HepG2 (cell line): ENCODE measurements at regions of chr18 and their contacts with region 1.

Region 1: DNA sequence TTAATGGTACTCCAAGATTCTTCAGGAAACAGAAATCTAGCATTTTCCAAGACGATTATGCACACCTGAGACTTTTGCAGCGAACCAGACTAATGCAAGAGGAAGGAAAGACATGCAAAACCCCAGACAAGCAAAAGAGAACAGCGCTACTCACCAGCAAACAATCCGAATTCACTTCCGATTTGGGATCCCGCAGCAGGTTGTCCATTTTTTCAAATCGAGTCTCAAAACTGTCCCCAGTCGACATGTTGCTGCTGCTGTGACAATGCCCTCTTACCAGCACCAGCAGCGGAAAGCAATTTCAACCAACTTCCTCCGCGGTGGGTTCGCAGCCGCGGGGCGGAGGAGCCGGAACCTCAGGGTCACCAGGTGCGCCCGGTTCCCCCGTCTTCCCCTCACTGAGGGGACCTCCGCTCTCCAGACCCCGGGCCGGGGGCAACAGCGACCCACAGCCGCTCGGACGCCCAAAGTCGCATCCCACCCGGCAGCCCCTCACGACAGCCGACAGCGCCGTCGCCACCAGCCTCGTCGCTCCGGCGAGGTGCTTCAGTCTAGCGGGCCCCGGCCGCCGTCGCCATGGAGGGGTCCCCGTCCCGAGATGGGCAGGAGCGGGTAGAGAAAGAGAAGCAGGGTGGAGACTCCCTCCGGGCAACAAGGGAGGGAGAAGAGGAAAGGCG is 811 bp downstream of the ROCK1 start:
- DNase-seq: no peak
- ATAC-seq: peak; percentile 39
- H3K4me3 ChIP-seq: peak overlapping the region; percentile 84 to 100 (median 100)
- H3K27ac ChIP-seq: peak overlapping the region; percentile 91
- H3K4me1 ChIP-seq: peaks cover 47% of the 10 kb centered on the region
- H3K27me3 ChIP-seq: no peaks in the 10 kb centered on the region; a peak in 1 of 5 replicates
- CTCF ChIP-seq: no peak
- EP300 ChIP-seq: no peak
- POLR2A ChIP-seq: no peak
- RAD21 ChIP-seq: no peak

Region 2: DNA sequence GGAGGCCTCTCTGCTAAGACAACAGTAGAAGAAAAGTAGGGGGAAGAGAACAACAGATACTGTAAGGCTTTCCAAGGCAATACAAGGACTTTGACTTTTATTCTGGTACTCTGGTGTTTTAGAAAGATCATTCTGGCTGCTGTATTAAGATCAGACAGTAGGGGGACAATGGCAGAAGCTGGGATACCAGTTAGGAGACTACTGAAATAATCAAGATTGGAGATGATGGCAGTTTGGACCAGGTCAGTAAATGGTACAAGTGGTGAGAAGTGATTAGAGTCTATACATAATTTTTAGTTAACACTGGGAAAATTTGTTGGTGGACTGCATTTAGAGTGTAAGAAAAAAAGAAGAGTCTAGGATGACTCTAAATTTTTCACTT is 138.9 kb before region 1 on chr18:
- CTCF ChIA-PET with region 1: no interaction called
- POLR2A ChIA-PET with region 1: no interaction called
- in situ Hi-C with region 1: no loop called
- intact Hi-C with region 1: loop called (anchors 1 kb)
- DNase-seq: peak; percentile 23
- ATAC-seq: peak; percentile 76
- H3K4me3 ChIP-seq: no peak overlapping the region
- H3K27ac ChIP-seq: no peak overlapping the region
- H3K4me1 ChIP-seq: no peaks in the 10 kb centered on the region
- H3K27me3 ChIP-seq: no peaks in the 10 kb centered on the region
- CTCF ChIP-seq: peak; percentile 30; the same call in 1 of the 2 replicates
- EP300 ChIP-seq: no peak
- POLR2A ChIP-seq: no peak
- RAD21 ChIP-seq: peak; percentile 18; the same call in 1 of the 2 replicates

Region 3: GRCh38 chr18:21053127-21053526 is 57.7 kb before region 1 on chr18:
- CTCF ChIA-PET with region 1: no interaction called
- POLR2A ChIA-PET with region 1: no interaction called
- in situ Hi-C with region 1: no loop called
- intact Hi-C with region 1: loop called (anchors 10 kb)
- DNase-seq: peak; percentile 69
- ATAC-seq: peak; percentile 90
- H3K4me3 ChIP-seq: no peak overlapping the region
- H3K27ac ChIP-seq: no peak overlapping the region
- H3K4me1 ChIP-seq: peaks cover 14% of the 10 kb centered on the region
- H3K27me3 ChIP-seq: no peaks in the 10 kb centered on the region
- CTCF ChIP-seq: no peak
- EP300 ChIP-seq: no peak
- POLR2A ChIP-seq: no peak
- RAD21 ChIP-seq: no peak

Region 4: DNA sequence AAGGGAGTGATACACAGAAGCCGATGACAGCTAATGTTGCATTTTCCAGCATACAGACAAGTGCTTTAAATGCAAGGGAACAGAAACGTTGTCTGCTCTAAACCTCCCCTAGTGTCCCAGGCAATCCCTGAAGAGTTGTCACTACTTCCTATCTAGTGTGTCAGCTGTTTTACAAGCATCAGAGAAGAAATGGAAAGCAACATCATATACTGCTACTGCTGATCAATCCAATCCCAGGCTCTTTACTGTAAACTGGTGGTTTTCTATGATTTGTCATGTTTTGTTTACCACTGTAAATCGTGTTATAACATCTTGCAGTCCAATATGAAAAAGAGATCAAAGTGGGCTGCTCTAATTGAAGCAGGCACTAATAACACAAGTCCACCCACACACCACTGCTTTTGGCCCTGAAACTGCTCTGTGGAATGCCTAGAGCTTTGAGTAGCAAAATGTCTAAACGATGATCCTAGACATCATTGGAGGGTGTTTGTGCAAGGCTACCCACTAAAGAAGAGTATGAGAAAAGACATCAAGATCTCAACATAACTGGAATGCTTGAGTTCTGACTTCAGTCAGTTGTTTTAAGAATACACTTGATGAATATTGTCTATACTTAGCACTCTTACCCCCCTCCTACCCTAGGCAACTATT is 18.9 kb after region 1 on chr18:
- CTCF ChIA-PET with region 1: no interaction called
- POLR2A ChIA-PET with region 1: no interaction called
- in situ Hi-C with region 1: no loop called
- intact Hi-C with region 1: no loop called
- DNase-seq: no peak
- ATAC-seq: no peak
- H3K4me3 ChIP-seq: no peak overlapping the region
- H3K27ac ChIP-seq: no peak overlapping the region
- H3K4me1 ChIP-seq: no peaks in the 10 kb centered on the region
- H3K27me3 ChIP-seq: peaks cover 0 to 3% of the 10 kb centered on the region in 2 experiments; a peak in 1 of 5 replicates
- CTCF ChIP-seq: no peak
- EP300 ChIP-seq: no peak
- POLR2A ChIP-seq: no peak
- RAD21 ChIP-seq: no peak